CD8-positive, alpha-beta T cell (primary cell): ENCODE measurements at regions of chr22 and their contacts with region 1.

Region 1: GRCh38 chr22:41621099-41621910 is at the start of gene XRCC6:
- DNase-seq: peak; percentile 99 to 100 (median 100)
- ATAC-seq: peak; percentile 93
- H3K4me3 ChIP-seq: peak within 1 kb of the TSS; percentile 84 to 100
- H3K4me3 Mint-ChIP-seq: peak within 1 kb of the TSS; percentile 100
- H3K27ac ChIP-seq: peak within 1 kb of the TSS; percentile 95 to 100
- H3K27ac Mint-ChIP-seq: peak within 1 kb of the TSS; percentile 100
- H3K4me1 ChIP-seq: peaks cover 25% of the 10 kb centered on the region
- H3K4me1 Mint-ChIP-seq: peaks cover 52% of the 10 kb centered on the region
- H3K27me3 ChIP-seq: no peaks in the 10 kb centered on the region
- H3K27me3 Mint-ChIP-seq: no peaks in the 10 kb centered on the region
- CTCF ChIP-seq: no peak
- total RNA-seq, gene XRCC6: 202 to 205 TPM

Region 2: GRCh38 chr22:41448189-41448808 is 173.0 kb before region 1 on chr22:
- CTCF ChIA-PET with region 1: no interaction called
- POLR2A ChIA-PET with region 1: interaction called, 3 read pairs
- intact Hi-C with region 1: loop called (anchors 1 to 2 kb)
- DNase-seq: peak; percentile 77 to 97 (median 88)
- ATAC-seq: peak; percentile 70
- H3K4me3 ChIP-seq: peak overlapping the region; percentile 79 to 96
- H3K4me3 Mint-ChIP-seq: peak overlapping the region; percentile 90
- H3K27ac ChIP-seq: peak overlapping the region; percentile 78 to 99
- H3K27ac Mint-ChIP-seq: peak overlapping the region; percentile 98
- H3K4me1 ChIP-seq: peaks cover 11% of the 10 kb centered on the region
- H3K4me1 Mint-ChIP-seq: peaks cover 23% of the 10 kb centered on the region
- H3K27me3 ChIP-seq: no peaks in the 10 kb centered on the region
- H3K27me3 Mint-ChIP-seq: no peaks in the 10 kb centered on the region
- CTCF ChIP-seq: no peak

Region 3: DNA sequence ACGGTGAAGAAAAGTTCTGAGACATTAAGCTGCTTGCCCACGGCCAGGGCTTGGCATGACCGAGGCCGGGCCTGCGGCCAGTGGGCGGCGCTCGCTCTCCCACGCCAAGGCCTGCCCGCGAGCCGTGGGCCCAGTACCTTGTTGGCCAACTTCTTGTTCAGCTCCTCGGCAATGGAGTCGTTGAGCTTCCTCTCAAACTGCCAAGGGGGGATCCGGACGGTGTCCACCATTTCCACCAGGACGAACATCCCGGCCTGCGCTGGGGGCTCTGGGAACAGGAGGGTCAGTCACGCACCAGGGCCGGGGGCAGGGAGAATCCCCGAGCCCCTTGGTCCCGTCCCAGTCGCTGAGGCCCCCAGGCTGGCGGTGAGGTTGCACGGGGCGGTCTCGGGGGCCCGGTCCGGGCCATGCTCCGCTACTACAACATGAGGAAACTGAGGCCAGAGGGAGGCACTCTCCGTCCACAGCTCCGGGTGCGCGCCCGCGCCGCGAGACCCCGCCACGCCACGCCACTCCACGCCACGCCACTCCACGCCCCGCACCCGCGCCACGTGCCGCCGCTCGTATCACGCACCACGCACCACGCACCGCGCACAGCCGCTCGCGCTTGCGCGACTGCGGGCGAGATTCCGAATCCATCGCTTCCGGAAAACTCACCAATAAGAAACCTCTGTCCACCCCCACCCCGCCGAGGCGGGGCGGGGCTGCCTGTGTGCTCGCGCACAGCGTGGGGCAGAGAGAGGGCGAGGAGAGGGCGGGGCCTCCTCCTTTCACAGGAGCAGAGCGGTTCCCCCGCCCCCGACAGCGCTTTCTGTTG is 77.2 kb before region 1 on chr22 and contains the start of gene POLR3H:
- CTCF ChIA-PET with region 1: interaction called, 3 read pairs
- POLR2A ChIA-PET with region 1: interaction called, 3 read pairs
- intact Hi-C with region 1: loop called in 1 of 2 experiments (anchors 1 kb)
- DNase-seq: peak; percentile 92 to 99 (median 97)
- ATAC-seq: peak; percentile 98
- H3K4me3 ChIP-seq: peak within 1 kb of the TSS; percentile 75 to 95
- H3K4me3 Mint-ChIP-seq: peak within 1 kb of the TSS; percentile 98
- H3K27ac ChIP-seq: peak within 1 kb of the TSS; percentile 82 to 83
- H3K27ac Mint-ChIP-seq: peak within 1 kb of the TSS; percentile 94
- H3K4me1 ChIP-seq: peaks cover 30% of the 10 kb centered on the region
- H3K4me1 Mint-ChIP-seq: peaks cover 40% of the 10 kb centered on the region
- H3K27me3 ChIP-seq: no peaks in the 10 kb centered on the region
- H3K27me3 Mint-ChIP-seq: no peaks in the 10 kb centered on the region
- CTCF ChIP-seq: no peak
- total RNA-seq, gene POLR3H: 11.2 to 11.7 TPM

Region 4: DNA sequence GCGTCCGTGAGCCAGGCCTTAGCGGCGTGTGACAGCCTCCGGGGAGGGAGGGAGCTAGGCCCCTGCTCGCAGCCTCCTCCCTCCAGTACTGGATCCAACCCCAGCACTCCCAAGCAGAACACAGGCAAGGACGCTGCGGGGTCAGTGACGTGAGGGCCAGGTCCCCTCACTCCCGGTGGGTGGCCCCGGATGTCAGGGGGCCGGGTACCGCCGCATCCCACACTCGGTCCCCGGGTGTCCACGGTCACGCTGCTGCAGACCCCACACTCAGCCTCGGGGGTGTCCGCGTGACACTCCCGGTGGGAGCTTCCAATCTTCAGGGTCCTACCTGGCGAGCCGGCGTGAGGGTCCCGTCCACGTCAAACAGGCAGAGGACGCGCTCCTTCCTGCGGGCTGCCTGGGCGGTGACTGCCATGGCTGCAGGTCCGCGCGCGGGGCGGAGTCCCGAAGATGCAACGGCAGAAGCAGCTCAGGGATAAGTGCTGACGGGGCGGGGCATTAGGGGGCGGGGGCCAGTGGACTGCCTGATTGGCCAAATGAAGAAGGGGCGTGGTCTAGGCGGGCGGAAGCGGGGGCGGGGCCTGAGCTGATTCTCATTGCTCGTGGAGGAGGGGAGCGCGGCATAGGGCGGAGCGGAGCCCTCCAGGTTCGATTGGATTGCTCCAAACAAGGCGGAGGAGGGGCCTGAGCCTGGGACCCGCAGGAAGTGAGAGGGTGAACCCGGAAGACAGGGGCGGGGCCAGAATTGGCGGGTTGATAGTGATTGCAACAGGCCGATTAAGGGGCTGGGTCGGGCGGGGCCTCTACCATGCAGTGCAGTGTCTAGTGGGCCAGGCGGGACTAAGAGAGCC is 31.7 kb before region 1 on chr22 and contains the start of gene PMM1:
- CTCF ChIA-PET with region 1: interaction called, 3 read pairs
- POLR2A ChIA-PET with region 1: interaction called, 37 read pairs
- intact Hi-C with region 1: loop called (anchors 1 kb)
- DNase-seq: peak; percentile 100
- ATAC-seq: peak; percentile 97
- H3K4me3 ChIP-seq: peak within 1 kb of the TSS; percentile 94 to 98
- H3K4me3 Mint-ChIP-seq: peak within 1 kb of the TSS; percentile 92
- H3K27ac ChIP-seq: peak within 1 kb of the TSS; percentile 50 to 75
- H3K27ac Mint-ChIP-seq: peak within 1 kb of the TSS; percentile 88
- H3K4me1 ChIP-seq: peaks cover 17% of the 10 kb centered on the region
- H3K4me1 Mint-ChIP-seq: peaks cover 20% of the 10 kb centered on the region
- H3K27me3 ChIP-seq: no peaks in the 10 kb centered on the region
- H3K27me3 Mint-ChIP-seq: no peaks in the 10 kb centered on the region
- CTCF ChIP-seq: no peak
- total RNA-seq, gene PMM1: 19.1 to 22.4 TPM

Region 5: GRCh38 chr22:41603873-41604332 is 17.4 kb before region 1 on chr22:
- CTCF ChIA-PET with region 1: interaction called, 3 read pairs
- POLR2A ChIA-PET with region 1: interaction called, 4 read pairs
- intact Hi-C with region 1: loop called in 1 of 2 experiments (anchors 1 kb)
- DNase-seq: peak in 8 of 9 experiments; percentile 5 to 92 (median 50)
- ATAC-seq: peak; percentile 96
- H3K4me3 ChIP-seq: no peak overlapping the region
- H3K4me3 Mint-ChIP-seq: no peak overlapping the region
- H3K27ac ChIP-seq: no peak overlapping the region
- H3K27ac Mint-ChIP-seq: no peak overlapping the region
- H3K4me1 ChIP-seq: peaks cover 13% of the 10 kb centered on the region
- H3K4me1 Mint-ChIP-seq: peaks cover 24% of the 10 kb centered on the region
- H3K27me3 ChIP-seq: no peaks in the 10 kb centered on the region
- H3K27me3 Mint-ChIP-seq: no peaks in the 10 kb centered on the region
- CTCF ChIP-seq: no peak

Region 6: DNA sequence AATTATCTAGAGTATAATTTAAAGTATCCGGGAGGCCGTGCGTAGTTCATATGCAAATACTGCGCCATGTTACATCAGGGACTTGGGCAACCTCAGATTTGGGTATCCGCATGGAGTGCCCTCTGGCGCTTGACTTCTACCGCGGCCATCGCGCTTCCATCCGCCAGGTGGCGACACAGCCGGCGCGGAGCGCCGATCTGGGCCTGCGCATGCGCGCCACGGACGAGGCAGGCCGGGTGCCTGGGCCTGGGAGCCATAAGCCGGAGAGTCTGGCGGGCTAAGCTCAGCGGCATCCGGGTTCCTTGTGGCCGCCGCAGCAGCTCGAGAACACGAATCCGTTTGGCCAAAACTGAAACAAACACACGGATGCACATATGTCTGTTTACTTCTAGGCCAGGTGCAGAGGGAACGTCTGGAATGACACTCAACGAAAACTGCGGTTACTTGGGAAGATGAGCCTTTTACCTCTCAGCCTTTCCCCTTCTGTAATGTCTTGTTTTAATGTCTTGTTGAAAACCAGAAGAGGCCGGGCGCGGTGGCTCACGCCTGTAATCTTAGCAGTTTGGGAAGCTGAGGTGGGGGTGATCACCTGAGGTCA is 45.5 kb after region 1 on chr22:
- CTCF ChIA-PET with region 1: interaction called, 3 read pairs
- POLR2A ChIA-PET with region 1: interaction called, 8 read pairs
- intact Hi-C with region 1: loop called (anchors 1 to 5 kb)
- DNase-seq: peak; percentile 89 to 97 (median 92)
- ATAC-seq: peak; percentile 94
- H3K4me3 ChIP-seq: peak overlapping the region; percentile 30 to 46
- H3K4me3 Mint-ChIP-seq: peak overlapping the region; percentile 84
- H3K27ac ChIP-seq: peak overlapping the region; percentile 57 to 85
- H3K27ac Mint-ChIP-seq: peak overlapping the region; percentile 96
- H3K4me1 ChIP-seq: peaks cover 9% of the 10 kb centered on the region
- H3K4me1 Mint-ChIP-seq: peaks cover 7% of the 10 kb centered on the region
- H3K27me3 ChIP-seq: no peaks in the 10 kb centered on the region
- H3K27me3 Mint-ChIP-seq: no peaks in the 10 kb centered on the region
- CTCF ChIP-seq: peak; percentile 94

Region 7: GRCh38 chr22:41688365-41689211 is 67.3 kb after region 1 on chr22 and contains the start of gene SNU13:
- CTCF ChIA-PET with region 1: no interaction called
- POLR2A ChIA-PET with region 1: no interaction called
- intact Hi-C with region 1: loop called (anchors 2 kb)
- DNase-seq: peak; percentile 84 to 97 (median 93)
- ATAC-seq: peak; percentile 92
- H3K4me3 ChIP-seq: peak within 1 kb of the TSS; percentile 90 to 96
- H3K4me3 Mint-ChIP-seq: peak within 1 kb of the TSS; percentile 90
- H3K27ac ChIP-seq: peak within 1 kb of the TSS; percentile 97
- H3K27ac Mint-ChIP-seq: peak within 1 kb of the TSS; percentile 95
- H3K4me1 ChIP-seq: peaks cover 17% of the 10 kb centered on the region
- H3K4me1 Mint-ChIP-seq: peaks cover 30% of the 10 kb centered on the region
- H3K27me3 ChIP-seq: no peaks in the 10 kb centered on the region
- H3K27me3 Mint-ChIP-seq: no peaks in the 10 kb centered on the region
- CTCF ChIP-seq: no peak
- total RNA-seq, gene SNU13: 158 to 173 TPM

Region 8: GRCh38 chr22:41725510-41726110 is 104.3 kb after region 1 on chr22:
- CTCF ChIA-PET with region 1: no interaction called
- POLR2A ChIA-PET with region 1: no interaction called
- intact Hi-C with region 1: no loop called
- DNase-seq: no peak
- ATAC-seq: no peak
- H3K4me3 ChIP-seq: no peak overlapping the region
- H3K4me3 Mint-ChIP-seq: no peak overlapping the region
- H3K27ac ChIP-seq: no peak overlapping the region
- H3K27ac Mint-ChIP-seq: no peak overlapping the region
- H3K4me1 ChIP-seq: no peaks in the 10 kb centered on the region
- H3K4me1 Mint-ChIP-seq: no peaks in the 10 kb centered on the region
- H3K27me3 ChIP-seq: no peaks in the 10 kb centered on the region
- H3K27me3 Mint-ChIP-seq: no peaks in the 10 kb centered on the region
- CTCF ChIP-seq: no peak